Mammary epithelial cell (primary cell): ENCODE measurements at regions of chr3 and their contacts with region 1.

Region 1: GRCh38 chr3:180802837-180803236 is 109.6 kb upstream of the FXR1 start:
- DNase-seq: peak; percentile 11
- H3K4me3 ChIP-seq: no peak overlapping the region
- H3K27ac ChIP-seq: no peak overlapping the region
- H3K4me1 ChIP-seq: no peaks in the 10 kb centered on the region
- H3K27me3 ChIP-seq: peaks cover 1% of the 10 kb centered on the region
- CTCF ChIP-seq: peak; percentile 41 to 65

Region 2: DNA sequence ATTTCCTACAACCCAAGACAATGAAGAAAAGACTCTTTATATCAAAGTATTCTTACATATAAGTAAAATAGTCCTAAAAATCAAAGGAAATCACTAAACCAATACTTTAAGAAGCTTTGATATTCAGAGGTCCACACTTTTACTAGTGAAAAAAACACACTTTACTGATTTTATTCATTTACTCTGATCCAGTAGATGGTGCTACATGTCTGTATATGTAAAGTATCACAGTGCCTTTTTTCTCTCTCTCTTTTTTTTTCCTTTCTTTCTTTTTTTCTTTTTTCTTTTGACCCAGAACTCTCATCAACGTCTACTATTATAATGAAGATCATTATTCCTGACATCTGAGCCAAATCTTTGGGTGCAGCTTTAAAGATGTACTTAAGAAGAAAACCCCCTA is 112.8 kb before region 1 on chr3:
- CTCF ChIA-PET with region 1: no interaction called
- dilution Hi-C with region 1: no loop called
- in situ Hi-C with region 1: no loop called
- intact Hi-C with region 1: loop called (anchors 2 kb)
- DNase-seq: no peak
- H3K4me3 ChIP-seq: no peak overlapping the region
- H3K27ac ChIP-seq: no peak overlapping the region
- H3K4me1 ChIP-seq: no peaks in the 10 kb centered on the region
- H3K27me3 ChIP-seq: peaks cover 3% of the 10 kb centered on the region
- CTCF ChIP-seq: peak in 1 of 2 donors; percentile 31

Region 3: GRCh38 chr3:180855364-180855763 is 52.5 kb after region 1 on chr3:
- CTCF ChIA-PET with region 1: no interaction called
- dilution Hi-C with region 1: no loop called
- in situ Hi-C with region 1: no loop called
- intact Hi-C with region 1: loop called (anchors 2 kb)
- DNase-seq: peak; percentile 6
- H3K4me3 ChIP-seq: no peak overlapping the region
- H3K27ac ChIP-seq: no peak overlapping the region
- H3K4me1 ChIP-seq: no peaks in the 10 kb centered on the region
- H3K27me3 ChIP-seq: peaks cover 4% of the 10 kb centered on the region
- CTCF ChIP-seq: peak; percentile 22 to 66

Region 4: GRCh38 chr3:180989291-180990163 is 186.7 kb after region 1 on chr3 and contains the start of gene DNAJC19:
- CTCF ChIA-PET with region 1: no interaction called
- dilution Hi-C with region 1: no loop called
- in situ Hi-C with region 1: no loop called
- intact Hi-C with region 1: loop called (anchors 10 kb)
- DNase-seq: peak; percentile 97
- H3K4me3 ChIP-seq: peak within 1 kb of the TSS; percentile 86 to 92 (median 86)
- H3K27ac ChIP-seq: peak within 1 kb of the TSS; percentile 77
- H3K4me1 ChIP-seq: peaks cover 3% of the 10 kb centered on the region
- H3K27me3 ChIP-seq: no peaks in the 10 kb centered on the region
- CTCF ChIP-seq: no peak
- total RNA-seq, gene DNAJC19: 24.8 to 46.9 TPM

Region 5: GRCh38 chr3:181176601-181177000 is 373.8 kb after region 1 on chr3:
- CTCF ChIA-PET with region 1: no interaction called
- dilution Hi-C with region 1: no loop called
- in situ Hi-C with region 1: no loop called
- intact Hi-C with region 1: loop called (anchors 1 kb)
- DNase-seq: peak; percentile 35
- H3K4me3 ChIP-seq: no peak overlapping the region
- H3K27ac ChIP-seq: no peak overlapping the region
- H3K4me1 ChIP-seq: no peaks in the 10 kb centered on the region
- H3K27me3 ChIP-seq: peaks cover 2% of the 10 kb centered on the region
- CTCF ChIP-seq: peak; percentile 54 to 72

Region 6: GRCh38 chr3:181326637-181327223 is 523.9 kb after region 1 on chr3:
- CTCF ChIA-PET with region 1: no interaction called
- dilution Hi-C with region 1: no loop called
- in situ Hi-C with region 1: no loop called
- intact Hi-C with region 1: loop called (anchors 10 kb)
- DNase-seq: peak; percentile 6
- H3K4me3 ChIP-seq: no peak overlapping the region
- H3K27ac ChIP-seq: no peak overlapping the region
- H3K4me1 ChIP-seq: no peaks in the 10 kb centered on the region
- H3K27me3 ChIP-seq: no peaks in the 10 kb centered on the region
- CTCF ChIP-seq: peak; percentile 67 to 80

Region 7: DNA sequence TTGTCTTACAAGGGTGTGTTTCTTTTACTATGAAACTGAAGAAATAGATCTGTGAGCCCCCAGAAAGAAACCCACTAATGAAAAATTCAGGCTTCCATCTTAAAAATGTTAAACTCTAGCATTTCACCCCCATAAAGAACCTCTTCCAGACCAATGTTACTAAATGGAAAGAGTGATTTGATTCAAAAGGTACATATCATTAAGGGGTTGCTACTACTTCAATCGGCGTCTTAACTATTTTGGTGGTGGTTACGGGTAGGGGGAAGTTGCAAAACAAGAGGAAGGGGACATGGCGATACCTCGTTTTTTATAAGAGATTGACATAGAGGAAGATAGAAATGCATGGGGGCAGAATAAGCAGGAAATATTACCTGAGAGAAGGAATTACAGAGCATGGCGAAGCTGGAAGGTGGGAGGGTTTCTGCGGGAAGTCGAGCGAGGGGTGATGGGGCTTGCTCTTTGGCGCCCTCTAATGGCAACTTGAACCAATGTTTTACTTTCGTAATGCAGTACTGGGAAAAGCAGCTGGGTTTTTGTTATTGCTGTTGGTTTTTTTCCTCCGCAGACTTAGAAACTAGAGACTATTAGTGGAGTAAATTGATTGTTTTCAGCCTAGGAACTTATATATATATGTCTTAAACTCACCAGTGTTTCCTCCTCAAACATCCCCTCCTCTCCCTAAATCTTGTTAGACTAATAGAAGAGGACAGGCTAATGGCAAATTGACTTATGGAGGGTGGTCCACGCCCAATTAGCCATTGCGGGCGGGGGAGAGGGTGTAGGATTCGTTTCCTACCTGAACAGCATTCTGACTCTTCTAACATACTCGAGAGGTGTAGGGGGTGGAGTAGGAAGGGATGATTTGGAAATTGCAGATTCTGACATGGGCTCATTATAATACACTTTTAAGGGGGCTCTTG is 897.6 kb after region 1 on chr3:
- CTCF ChIA-PET with region 1: no interaction called
- dilution Hi-C with region 1: no loop called
- in situ Hi-C with region 1: no loop called
- intact Hi-C with region 1: loop called (anchors 2 kb)
- DNase-seq: peak; percentile 66
- H3K4me3 ChIP-seq: peak overlapping the region in 2 of 3 experiments; percentile 10 to 34
- H3K27ac ChIP-seq: no peak overlapping the region
- H3K4me1 ChIP-seq: peaks cover 28% of the 10 kb centered on the region
- H3K27me3 ChIP-seq: peaks cover 25% of the 10 kb centered on the region
- CTCF ChIP-seq: peak; percentile 87 to 88